ENCODE measurements at regions of chr12 and their contacts with region 1.

Region 1: DNA sequence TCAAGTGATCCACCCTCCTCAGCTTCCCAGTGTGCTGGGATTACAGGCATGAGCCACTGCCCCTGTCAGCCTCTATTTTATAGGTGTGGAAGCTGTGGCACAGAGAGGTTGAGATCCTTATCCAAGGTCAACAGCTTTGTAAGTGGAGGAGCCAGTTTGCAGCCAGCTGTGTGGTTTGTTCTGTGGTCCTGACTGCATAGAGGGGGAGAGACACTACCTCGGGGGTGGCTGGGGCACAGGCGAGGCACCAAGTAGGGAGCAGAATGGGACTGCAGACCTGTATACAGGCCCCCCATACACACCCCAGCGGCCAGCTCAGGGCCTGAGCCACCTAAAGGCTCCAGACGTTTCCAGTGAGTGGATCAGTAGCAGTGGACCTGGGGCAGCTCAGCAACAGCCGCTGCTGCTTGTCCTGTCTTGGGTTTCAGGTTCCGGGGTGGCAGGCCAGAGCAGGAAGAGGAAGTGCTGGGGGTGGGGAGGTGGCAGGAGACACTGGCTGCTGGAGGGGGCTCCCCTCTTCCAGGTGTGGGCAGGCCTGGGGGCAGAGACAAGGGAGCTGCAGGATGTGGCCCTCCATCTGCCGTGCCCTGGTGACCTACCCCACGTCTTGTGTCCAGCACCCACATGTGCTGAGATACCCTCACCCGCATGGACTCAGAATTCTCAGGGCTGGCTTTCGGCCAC is 11.0 kb downstream of the ORAI1 start:
- DNase-seq: no peak

Region 2: GRCh38 chr12:121626087-121626852 is 11.1 kb before region 1 on chr12 and contains the start of gene ORAI1:
- CTCF ChIA-PET with region 1: no interaction called
- POLR2A ChIA-PET with region 1: interaction called, 11 read pairs
- DNase-seq: peak; percentile 95

Measured in HEK293T (cell line).